PC-9 (cell line): ENCODE measurements at regions of chr6 and their contacts with region 1.

Region 1: DNA sequence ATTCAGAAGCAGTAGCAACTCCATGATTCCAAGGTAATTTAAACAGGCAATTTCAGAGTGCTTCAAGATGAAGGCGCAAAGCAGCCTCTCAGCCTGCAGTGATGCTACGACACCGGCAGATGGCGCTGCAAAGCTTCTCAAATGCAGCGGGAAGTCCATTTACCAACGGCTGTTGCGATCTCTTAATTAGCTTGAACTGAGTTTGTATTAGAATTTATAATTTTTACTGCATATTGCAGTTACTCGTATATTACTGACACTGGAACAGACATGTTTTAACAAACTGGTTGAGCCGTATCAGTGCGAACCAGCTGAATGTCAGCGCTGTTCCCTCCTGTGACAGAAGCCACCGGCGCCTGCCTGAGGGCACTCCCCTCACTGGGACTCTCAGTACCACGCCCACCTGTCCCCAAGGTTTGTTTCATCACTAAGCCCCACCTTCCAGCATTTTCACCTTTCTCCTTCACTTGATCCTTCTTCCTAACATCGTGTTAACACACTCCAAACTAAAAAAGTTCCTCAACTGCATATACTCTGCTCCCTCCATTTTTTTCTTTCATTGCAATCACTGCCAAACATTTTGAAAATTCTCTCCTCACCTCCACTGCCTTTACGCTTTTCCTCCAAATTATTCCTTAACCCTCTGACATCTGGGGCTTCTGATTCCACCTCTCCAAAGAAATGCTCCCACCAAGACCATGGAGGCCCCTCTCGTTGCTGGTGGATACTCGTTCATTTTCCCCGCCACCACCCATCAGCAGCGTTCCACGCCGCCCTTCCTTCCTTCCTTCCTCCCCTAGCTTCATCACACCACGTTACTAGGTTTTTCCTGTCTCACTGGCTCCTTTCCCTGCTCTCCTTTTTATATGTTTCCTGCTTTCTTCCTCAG is 14.5 kb downstream of the GNL1 start:
- DNase-seq: peak; percentile 73 to 79
- H3K4me3 ChIP-seq: peak overlapping the region; percentile 49
- H3K27ac ChIP-seq: no peak overlapping the region
- H3K4me1 ChIP-seq: peaks cover 6% of the 10 kb centered on the region; the same call in 1 of the 2 replicates
- H3K27me3 ChIP-seq: no peaks in the 10 kb centered on the region
- CTCF ChIP-seq: peak; percentile 98

Region 2: DNA sequence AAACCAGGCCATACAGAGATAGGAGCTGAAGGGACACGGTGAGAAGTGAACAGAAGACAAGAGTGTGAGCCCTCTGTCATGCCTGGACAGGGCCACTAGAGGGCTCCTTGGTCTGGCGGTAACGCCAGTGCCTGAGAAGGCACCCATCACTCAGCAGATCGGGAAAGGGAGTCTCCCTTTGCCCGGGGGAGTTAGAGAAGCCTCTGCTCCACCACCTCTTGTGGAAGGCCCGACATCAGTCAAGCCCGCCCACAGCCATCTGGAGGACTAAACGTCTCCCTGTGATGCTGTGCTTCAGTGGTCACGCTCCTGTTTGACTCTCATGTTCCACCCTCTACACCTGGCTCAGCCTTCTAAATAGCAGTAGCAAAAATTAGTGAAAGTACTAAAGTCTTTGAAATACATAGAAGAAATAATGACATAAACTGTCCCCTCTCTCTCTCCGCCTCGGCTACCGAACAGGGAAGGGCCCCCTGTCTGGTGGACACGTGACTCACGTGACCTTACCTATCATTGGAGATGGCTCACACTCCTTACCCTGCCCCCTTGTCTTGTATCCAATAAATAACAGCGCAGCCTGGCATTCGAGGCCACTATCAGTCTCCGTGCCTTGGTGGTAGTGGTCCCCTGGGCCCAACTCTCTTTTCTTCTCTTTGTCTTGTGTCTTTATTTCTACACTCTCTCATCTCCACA is 130.1 kb before region 1 on chr6:
- CTCF ChIA-PET with region 1: interaction called, 15 read pairs
- POLR2A ChIA-PET with region 1: no interaction called
- intact Hi-C with region 1: no loop called
- DNase-seq: peak in 1 of 2 experiments; percentile 55
- H3K4me3 ChIP-seq: no peak overlapping the region
- H3K27ac ChIP-seq: no peak overlapping the region
- H3K4me1 ChIP-seq: no peaks in the 10 kb centered on the region
- H3K27me3 ChIP-seq: peaks cover 77% of the 10 kb centered on the region
- CTCF ChIP-seq: peak; percentile 73

Region 3: GRCh38 chr6:30600451-30600961 is 58.7 kb after region 1 on chr6:
- CTCF ChIA-PET with region 1: interaction called, 4 read pairs
- POLR2A ChIA-PET with region 1: no interaction called
- intact Hi-C with region 1: loop called (anchors 1 kb)
- DNase-seq: no peak
- H3K4me3 ChIP-seq: no peak overlapping the region
- H3K27ac ChIP-seq: no peak overlapping the region
- H3K4me1 ChIP-seq: no peaks in the 10 kb centered on the region
- H3K27me3 ChIP-seq: no peaks in the 10 kb centered on the region
- CTCF ChIP-seq: no peak

Region 4: DNA sequence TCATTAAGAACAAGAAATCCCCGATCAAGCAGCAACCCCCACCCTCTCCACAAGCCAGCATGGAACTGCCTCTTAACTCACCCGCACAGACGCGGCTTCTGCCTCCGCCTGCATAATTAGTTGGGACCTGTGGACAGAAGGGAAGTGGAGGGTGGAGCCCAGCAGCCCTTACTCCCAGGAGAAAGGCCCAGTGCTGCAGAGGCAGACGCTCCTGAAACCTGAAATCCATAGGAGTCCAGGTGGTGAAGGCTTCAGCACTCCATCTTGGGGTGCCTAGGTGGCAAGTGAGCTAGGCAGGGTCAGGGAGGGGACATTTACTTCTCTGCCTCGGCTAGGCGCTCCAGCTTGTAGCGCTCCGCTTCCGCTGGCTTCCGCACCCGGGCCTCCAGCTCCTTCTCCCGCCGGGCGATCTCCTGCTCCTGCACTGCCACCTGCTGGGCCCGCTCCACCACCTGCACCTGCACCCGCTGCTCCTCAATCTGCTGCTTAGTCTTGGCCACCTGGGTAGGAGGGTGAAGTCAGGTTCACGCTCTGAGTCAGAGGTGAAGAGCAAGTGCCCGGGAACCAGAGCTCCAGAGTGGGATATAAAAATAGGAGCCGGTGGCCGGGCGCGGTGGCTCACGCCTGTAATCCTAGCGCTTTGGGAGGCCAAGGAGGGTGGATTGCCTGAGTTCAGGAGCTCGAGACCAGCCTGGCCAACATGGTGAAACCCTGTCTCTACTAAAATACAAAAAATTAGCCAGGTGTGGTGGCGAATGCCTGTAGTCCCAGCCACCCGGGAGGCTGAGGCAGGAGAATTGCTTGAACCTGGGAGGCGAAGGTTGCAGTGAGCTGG is 189.1 kb after region 1 on chr6:
- CTCF ChIA-PET with region 1: interaction called, 4 read pairs
- POLR2A ChIA-PET with region 1: no interaction called
- intact Hi-C with region 1: loop called (anchors 2 kb)
- DNase-seq: peak; percentile 89 to 92
- H3K4me3 ChIP-seq: no peak overlapping the region
- H3K27ac ChIP-seq: peak overlapping the region; percentile 18; the same call in 1 of the 2 replicates
- H3K4me1 ChIP-seq: peaks cover 16% of the 10 kb centered on the region
- H3K27me3 ChIP-seq: no peaks in the 10 kb centered on the region
- CTCF ChIP-seq: peak; percentile 80

Region 5: GRCh38 chr6:30877419-30878371 is 335.9 kb after region 1 on chr6:
- CTCF ChIA-PET with region 1: no interaction called
- POLR2A ChIA-PET with region 1: no interaction called
- intact Hi-C with region 1: loop called (anchors 2 kb)
- DNase-seq: peak; percentile 72 to 86
- H3K4me3 ChIP-seq: peak overlapping the region; percentile 49; the same call in 1 of the 2 replicates
- H3K27ac ChIP-seq: no peak overlapping the region
- H3K4me1 ChIP-seq: peaks cover 20% of the 10 kb centered on the region
- H3K27me3 ChIP-seq: no peaks in the 10 kb centered on the region
- CTCF ChIP-seq: peak; percentile 92